ENCODE measurements at regions of chr3 and their contacts with region 1.

Region 1: GRCh38 chr3:30693470-30694120 is 87.2 kb downstream of the TGFBR2 start:
- DNase-seq: no peak
- ATAC-seq: peak; percentile 81 to 89 (median 84)
- H3K4me3 ChIP-seq: no peak overlapping the region
- H3K27ac ChIP-seq: no peak overlapping the region
- H3K4me1 ChIP-seq: peaks cover 62% of the 10 kb centered on the region
- H3K27me3 ChIP-seq: no peaks in the 10 kb centered on the region
- CTCF ChIP-seq: peak; percentile 85

Region 2: GRCh38 chr3:30042274-30042859 is 651.2 kb before region 1 on chr3:
- intact Hi-C with region 1: loop called (anchors 5 to 10 kb)
- DNase-seq: peak; percentile 28 to 56
- ATAC-seq: peak in 3 of 4 donors; percentile 61 to 82 (median 64)
- H3K4me3 ChIP-seq: no peak overlapping the region
- H3K27ac ChIP-seq: no peak overlapping the region
- H3K4me1 ChIP-seq: no peaks in the 10 kb centered on the region
- H3K27me3 ChIP-seq: no peaks in the 10 kb centered on the region
- CTCF ChIP-seq: peak; percentile 84

Region 3: DNA sequence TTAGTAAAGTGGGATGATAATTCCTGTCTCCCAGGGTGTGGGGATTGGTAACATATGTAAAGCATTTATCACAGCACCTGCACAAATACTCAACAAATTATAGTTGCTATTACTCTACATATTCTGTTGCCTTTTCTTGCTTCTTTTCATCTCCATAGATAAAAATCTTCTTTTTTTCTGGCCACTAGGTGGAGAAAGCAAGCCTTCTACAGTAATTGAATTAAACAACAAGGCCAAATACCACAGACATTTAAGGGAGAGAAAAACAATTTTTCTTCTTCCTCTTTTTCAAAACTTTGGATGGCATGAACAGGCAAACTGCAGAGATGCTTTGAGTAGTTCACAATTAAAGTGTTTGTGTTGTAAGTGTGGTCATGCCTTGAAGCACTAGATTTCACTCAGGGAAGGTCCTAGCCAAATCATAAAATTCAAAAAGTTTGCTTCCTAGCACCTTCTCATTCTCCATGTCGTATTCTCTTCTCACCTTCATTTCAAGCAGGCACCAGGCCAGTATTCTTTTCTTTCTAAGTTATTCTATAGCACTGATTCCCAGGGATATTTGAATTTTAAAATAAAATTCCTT is 580.6 kb before region 1 on chr3:
- intact Hi-C with region 1: loop called (anchors 2 to 5 kb)
- DNase-seq: no peak
- ATAC-seq: no peak
- H3K4me3 ChIP-seq: no peak overlapping the region
- H3K27ac ChIP-seq: no peak overlapping the region
- H3K4me1 ChIP-seq: no peaks in the 10 kb centered on the region
- H3K27me3 ChIP-seq: no peaks in the 10 kb centered on the region
- CTCF ChIP-seq: peak; percentile 65

Region 4: GRCh38 chr3:30199096-30199759 is 494.4 kb before region 1 on chr3:
- intact Hi-C with region 1: loop called (anchors 5 to 10 kb)
- DNase-seq: peak; percentile 68 to 81
- ATAC-seq: peak; percentile 54 to 78 (median 60)
- H3K4me3 ChIP-seq: no peak overlapping the region
- H3K27ac ChIP-seq: no peak overlapping the region
- H3K4me1 ChIP-seq: no peaks in the 10 kb centered on the region
- H3K27me3 ChIP-seq: no peaks in the 10 kb centered on the region
- CTCF ChIP-seq: peak; percentile 89

Region 5: DNA sequence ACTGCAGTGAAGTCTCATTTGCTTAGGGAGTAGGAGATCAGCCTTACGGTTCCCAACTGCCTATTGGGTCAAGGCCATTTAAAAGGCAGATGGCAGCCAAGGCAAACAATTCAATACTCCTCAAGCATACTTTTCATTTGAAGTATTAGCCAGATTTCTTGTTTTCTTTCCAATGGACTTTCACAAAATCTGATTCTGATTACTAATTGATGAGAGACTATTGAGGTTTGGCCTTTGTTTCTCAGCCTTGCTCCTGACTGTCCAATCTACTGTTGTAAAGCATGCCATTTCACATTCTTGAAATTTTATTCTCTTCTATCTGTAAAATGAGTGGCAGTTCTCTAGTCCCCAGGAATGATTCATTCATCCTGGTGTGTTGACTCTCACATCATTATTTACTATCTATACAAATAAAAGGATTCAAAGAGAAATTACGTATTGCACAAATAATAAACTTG is 253.4 kb before region 1 on chr3:
- intact Hi-C with region 1: loop called in 1 of 2 experiments (anchors 10 kb)
- DNase-seq: no peak
- ATAC-seq: no peak
- H3K4me3 ChIP-seq: no peak overlapping the region
- H3K27ac ChIP-seq: no peak overlapping the region
- H3K4me1 ChIP-seq: peaks cover 24% of the 10 kb centered on the region
- H3K27me3 ChIP-seq: no peaks in the 10 kb centered on the region
- CTCF ChIP-seq: no peak

Region 6: DNA sequence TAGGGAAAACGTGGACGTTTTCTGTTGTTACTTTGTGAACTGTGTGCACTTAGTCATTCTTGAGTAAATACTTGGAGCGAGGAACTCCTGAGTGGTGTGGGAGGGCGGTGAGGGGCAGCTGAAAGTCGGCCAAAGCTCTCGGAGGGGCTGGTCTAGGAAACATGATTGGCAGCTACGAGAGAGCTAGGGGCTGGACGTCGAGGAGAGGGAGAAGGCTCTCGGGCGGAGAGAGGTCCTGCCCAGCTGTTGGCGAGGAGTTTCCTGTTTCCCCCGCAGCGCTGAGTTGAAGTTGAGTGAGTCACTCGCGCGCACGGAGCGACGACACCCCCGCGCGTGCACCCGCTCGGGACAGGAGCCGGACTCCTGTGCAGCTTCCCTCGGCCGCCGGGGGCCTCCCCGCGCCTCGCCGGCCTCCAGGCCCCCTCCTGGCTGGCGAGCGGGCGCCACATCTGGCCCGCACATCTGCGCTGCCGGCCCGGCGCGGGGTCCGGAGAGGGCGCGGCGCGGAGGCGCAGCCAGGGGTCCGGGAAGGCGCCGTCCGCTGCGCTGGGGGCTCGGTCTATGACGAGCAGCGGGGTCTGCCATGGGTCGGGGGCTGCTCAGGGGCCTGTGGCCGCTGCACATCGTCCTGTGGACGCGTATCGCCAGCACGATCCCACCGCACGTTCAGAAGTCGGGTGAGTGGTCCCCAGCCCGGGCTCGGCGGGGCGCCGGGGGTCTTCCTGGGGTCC is 87.1 kb before region 1 on chr3 and contains the start of gene TGFBR2:
- intact Hi-C with region 1: loop called in 1 of 2 experiments (anchors 5 kb)
- DNase-seq: peak; percentile 96 to 97
- ATAC-seq: peak; percentile 96 to 97 (median 97)
- H3K4me3 ChIP-seq: peak within 1 kb of the TSS; percentile 89
- H3K27ac ChIP-seq: peak within 1 kb of the TSS; percentile 91
- H3K4me1 ChIP-seq: peaks cover 8% of the 10 kb centered on the region
- H3K27me3 ChIP-seq: no peaks in the 10 kb centered on the region
- CTCF ChIP-seq: peak; percentile 23
- total RNA-seq, gene TGFBR2: 36.0 to 51.8 (median 44.6) TPM

Region 7: DNA sequence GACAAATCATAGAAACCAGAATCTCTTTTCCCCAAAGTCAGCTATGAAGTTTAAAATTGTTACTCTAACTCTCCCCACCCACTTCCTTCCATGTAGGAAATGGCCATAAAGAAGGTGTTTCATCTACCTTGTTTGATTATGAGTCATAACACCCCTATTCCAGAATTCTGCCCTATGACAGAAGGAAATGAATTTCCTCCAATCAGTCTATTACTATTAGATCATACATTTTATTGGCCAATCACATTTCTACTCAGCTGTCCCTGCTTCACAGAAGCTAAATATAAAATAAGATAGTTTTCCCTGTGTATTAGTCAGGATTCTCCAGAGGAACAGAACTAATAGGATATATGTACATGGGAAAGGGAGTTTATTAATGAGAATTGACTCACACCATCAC is 14.9 kb after region 1 on chr3:
- intact Hi-C with region 1: no loop called
- DNase-seq: no peak
- ATAC-seq: no peak
- H3K4me3 ChIP-seq: no peak overlapping the region
- H3K27ac ChIP-seq: no peak overlapping the region
- H3K4me1 ChIP-seq: no peaks in the 10 kb centered on the region
- H3K27me3 ChIP-seq: no peaks in the 10 kb centered on the region
- CTCF ChIP-seq: no peak